ENCODE measurements at regions of chr13 and their contacts with region 1.

Region 1: GRCh38 chr13:98672944-98673545 is 79.4 kb downstream of the SLC15A1 start:
- DNase-seq: peak; percentile 71
- ATAC-seq: peak; percentile 94
- H3K4me3 ChIP-seq: no peak overlapping the region; a peak in 1 of 4 replicates
- H3K27ac ChIP-seq: no peak overlapping the region
- H3K4me1 ChIP-seq: peaks cover 0 to 11% of the 10 kb centered on the region in 2 experiments; a peak in 2 of 4 replicates
- H3K27me3 ChIP-seq: no peaks in the 10 kb centered on the region
- CTCF ChIP-seq: peak; percentile 80 to 99 (median 97)
- POLR2A ChIP-seq: no peak
- RAD21 ChIP-seq: peak; percentile 92

Region 2: GRCh38 chr13:97855570-97856303 is 817.3 kb before region 1 on chr13:
- CTCF ChIA-PET with region 1: interaction called, 4 read pairs
- POLR2A ChIA-PET with region 1: no interaction called
- RAD21 ChIA-PET with region 1: no interaction called
- intact Hi-C with region 1: loop called (anchors 2 kb)
- DNase-seq: peak; percentile 58
- ATAC-seq: peak; percentile 96
- H3K4me3 ChIP-seq: no peak overlapping the region
- H3K27ac ChIP-seq: no peak overlapping the region
- H3K4me1 ChIP-seq: no peaks in the 10 kb centered on the region
- H3K27me3 ChIP-seq: no peaks in the 10 kb centered on the region
- CTCF ChIP-seq: peak; percentile 73 to 84 (median 74)
- POLR2A ChIP-seq: no peak
- RAD21 ChIP-seq: peak; percentile 90

Region 3: GRCh38 chr13:98033277-98034247 is 639.5 kb before region 1 on chr13:
- CTCF ChIA-PET with region 1: interaction called, 10 read pairs
- POLR2A ChIA-PET with region 1: no interaction called
- RAD21 ChIA-PET with region 1: interaction called in 1 of 2 experiments, 3 read pairs
- intact Hi-C with region 1: loop called (anchors 2 kb)
- DNase-seq: peak; percentile 16
- ATAC-seq: peak; percentile 83
- H3K4me3 ChIP-seq: no peak overlapping the region
- H3K27ac ChIP-seq: no peak overlapping the region
- H3K4me1 ChIP-seq: no peaks in the 10 kb centered on the region
- H3K27me3 ChIP-seq: no peaks in the 10 kb centered on the region
- CTCF ChIP-seq: peak; percentile 38 to 76 (median 39); a peak in 5 of 6 replicates
- POLR2A ChIP-seq: no peak
- RAD21 ChIP-seq: peak; percentile 74

Region 4: DNA sequence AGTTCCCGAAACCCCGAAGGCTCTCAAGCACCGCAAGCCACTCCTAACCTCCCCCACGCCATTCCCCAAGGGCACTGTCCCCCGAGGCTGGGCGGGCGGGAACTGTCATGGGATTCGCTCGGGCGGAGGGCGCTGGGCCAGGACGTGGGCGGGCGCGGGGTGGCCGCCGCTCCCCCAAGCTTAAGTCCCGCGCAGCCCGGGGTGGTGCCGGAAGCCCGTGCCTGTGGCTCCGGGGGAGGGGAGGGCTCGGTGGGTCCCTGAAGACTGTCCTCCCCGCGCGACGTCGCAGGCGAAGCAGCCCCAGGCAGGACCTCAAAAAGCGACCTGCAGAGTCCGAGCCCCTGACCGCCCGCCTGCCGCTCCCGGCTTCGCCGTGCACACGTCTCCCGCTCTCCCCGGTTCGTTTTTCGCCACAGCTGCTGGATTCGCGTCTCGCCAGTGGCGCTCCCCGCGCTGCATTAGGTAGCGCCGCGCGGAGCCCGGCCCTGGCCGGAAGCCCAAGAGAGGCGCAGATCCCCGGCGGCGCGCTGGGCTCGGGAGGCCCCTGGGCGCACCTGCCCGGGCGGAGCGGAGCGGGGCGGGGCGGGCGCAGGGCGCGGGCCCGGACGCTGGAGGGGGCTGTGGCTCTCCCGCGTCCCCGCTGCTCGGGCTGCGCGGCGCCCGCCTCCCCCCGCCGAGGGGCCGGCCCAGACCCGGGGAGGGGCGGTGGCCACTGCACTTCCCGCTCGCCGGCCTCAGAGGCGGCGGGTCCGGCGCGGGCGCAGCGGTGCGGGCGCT is 530.5 kb before region 1 on chr13 and contains the start of gene FARP1:
- CTCF ChIA-PET with region 1: no interaction called
- POLR2A ChIA-PET with region 1: no interaction called
- RAD21 ChIA-PET with region 1: no interaction called
- intact Hi-C with region 1: loop called (anchors 10 kb)
- DNase-seq: peak; percentile 27
- ATAC-seq: peak; percentile 89
- H3K4me3 ChIP-seq: peak within 1 kb of the TSS; percentile 51 to 72
- H3K27ac ChIP-seq: peak within 1 kb of the TSS; percentile 64; the same call in 1 of the 2 replicates
- H3K4me1 ChIP-seq: peaks cover 34 to 45% of the 10 kb centered on the region in 2 experiments
- H3K27me3 ChIP-seq: no peaks in the 10 kb centered on the region
- CTCF ChIP-seq: no peak; a peak in 1 of 6 replicates
- POLR2A ChIP-seq: no peak
- RAD21 ChIP-seq: peak; percentile 34
- total RNA-seq, gene FARP1: 30.5 TPM

Region 5: GRCh38 chr13:98445340-98446233 is 227.5 kb before region 1 on chr13:
- CTCF ChIA-PET with region 1: interaction called, 39 read pairs
- POLR2A ChIA-PET with region 1: no interaction called
- RAD21 ChIA-PET with region 1: interaction called in 1 of 2 experiments, 5 read pairs
- intact Hi-C with region 1: loop called (anchors 1 kb)
- DNase-seq: peak; percentile 41
- ATAC-seq: peak; percentile 87
- H3K4me3 ChIP-seq: no peak overlapping the region
- H3K27ac ChIP-seq: no peak overlapping the region; the same call in 1 of the 2 replicates
- H3K4me1 ChIP-seq: peaks cover 0 to 35% of the 10 kb centered on the region in 2 experiments; a peak in 2 of 4 replicates
- H3K27me3 ChIP-seq: no peaks in the 10 kb centered on the region
- CTCF ChIP-seq: peak in 2 of 3 experiments; percentile 89 to 97; a peak in 4 of 6 replicates
- POLR2A ChIP-seq: no peak
- RAD21 ChIP-seq: no peak

Region 6: DNA sequence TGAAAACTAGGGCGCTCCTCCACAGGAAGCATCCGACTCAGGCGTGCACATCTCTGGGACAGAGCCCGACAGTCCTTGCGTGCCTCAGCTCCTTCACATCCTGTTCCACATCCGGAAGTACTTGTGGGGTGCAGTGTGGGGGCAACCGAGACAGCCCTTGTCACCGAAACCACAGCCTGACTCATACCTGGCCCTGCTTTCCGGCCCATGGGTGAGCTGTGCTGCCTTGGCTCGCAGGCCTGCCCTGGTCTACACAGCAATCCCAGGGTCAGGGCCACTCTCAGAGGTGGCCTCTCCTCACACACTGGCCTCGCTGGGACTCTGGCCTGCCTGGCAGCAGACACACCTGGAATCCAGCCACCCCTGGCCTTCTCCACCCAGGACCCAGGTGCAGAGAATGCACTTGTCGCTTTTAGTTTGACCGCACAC is 196.5 kb before region 1 on chr13:
- CTCF ChIA-PET with region 1: no interaction called
- POLR2A ChIA-PET with region 1: no interaction called
- RAD21 ChIA-PET with region 1: no interaction called
- intact Hi-C with region 1: no loop called
- DNase-seq: peak; percentile 64
- ATAC-seq: peak; percentile 92
- H3K4me3 ChIP-seq: peak overlapping the region; percentile 24 to 30
- H3K27ac ChIP-seq: peak overlapping the region; percentile 76
- H3K4me1 ChIP-seq: peaks cover 25 to 58% of the 10 kb centered on the region in 2 experiments
- H3K27me3 ChIP-seq: no peaks in the 10 kb centered on the region
- CTCF ChIP-seq: no peak
- POLR2A ChIP-seq: no peak
- RAD21 ChIP-seq: no peak

Region 7: GRCh38 chr13:98653463-98653985 is 19.5 kb before region 1 on chr13:
- CTCF ChIA-PET with region 1: interaction called, 11 read pairs
- POLR2A ChIA-PET with region 1: no interaction called
- RAD21 ChIA-PET with region 1: interaction called in 1 of 2 experiments, 3 read pairs
- intact Hi-C with region 1: no loop called
- DNase-seq: peak; percentile 85
- ATAC-seq: peak; percentile 97
- H3K4me3 ChIP-seq: no peak overlapping the region
- H3K27ac ChIP-seq: no peak overlapping the region
- H3K4me1 ChIP-seq: peaks cover 0 to 28% of the 10 kb centered on the region in 2 experiments; a peak in 2 of 4 replicates
- H3K27me3 ChIP-seq: no peaks in the 10 kb centered on the region
- CTCF ChIP-seq: peak; percentile 86 to 94 (median 92)
- POLR2A ChIP-seq: no peak
- RAD21 ChIP-seq: peak; percentile 93

Region 8: DNA sequence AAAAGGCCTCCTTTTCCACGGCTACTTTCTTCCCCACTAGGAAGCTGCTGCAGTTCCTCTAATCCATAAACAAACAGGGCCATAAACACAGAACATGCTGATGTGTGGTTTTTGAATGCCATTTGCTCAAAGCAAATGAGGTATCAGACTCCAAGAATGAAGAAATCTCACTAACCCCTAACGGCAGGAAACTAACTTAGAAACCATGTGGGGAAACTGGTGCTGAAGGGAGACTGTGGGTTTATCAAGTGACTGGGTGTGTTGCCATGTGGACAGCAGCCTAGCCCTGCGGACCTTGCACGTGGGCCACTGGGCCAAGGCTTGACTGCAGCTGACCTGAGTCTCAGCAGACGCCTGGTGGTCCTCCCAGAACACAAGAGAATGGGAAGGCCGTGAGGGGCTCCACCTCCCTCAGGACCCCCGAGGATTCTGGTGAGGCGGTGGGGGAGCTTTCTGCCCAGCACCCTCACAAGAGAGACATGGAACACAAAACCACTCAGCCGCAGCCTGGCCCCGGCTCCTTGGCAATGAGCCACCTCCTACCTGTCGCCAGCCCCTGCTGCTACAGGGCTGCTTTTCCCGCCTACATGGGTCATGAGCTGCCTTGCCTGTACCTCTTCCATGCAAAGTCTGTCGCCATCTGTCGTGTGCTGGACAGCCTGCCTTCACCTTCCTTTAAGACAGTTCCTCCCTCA is 68.8 kb after region 1 on chr13:
- CTCF ChIA-PET with region 1: no interaction called
- POLR2A ChIA-PET with region 1: no interaction called
- RAD21 ChIA-PET with region 1: no interaction called
- intact Hi-C with region 1: no loop called
- DNase-seq: no peak
- ATAC-seq: no peak
- H3K4me3 ChIP-seq: no peak overlapping the region
- H3K27ac ChIP-seq: no peak overlapping the region
- H3K4me1 ChIP-seq: peaks cover 0 to 3% of the 10 kb centered on the region in 2 experiments; a peak in 2 of 4 replicates
- H3K27me3 ChIP-seq: no peaks in the 10 kb centered on the region
- CTCF ChIP-seq: no peak
- POLR2A ChIP-seq: no peak
- RAD21 ChIP-seq: no peak

Region 9: GRCh38 chr13:99033814-99034213 is 360.8 kb after region 1 on chr13:
- CTCF ChIA-PET with region 1: no interaction called
- POLR2A ChIA-PET with region 1: no interaction called
- RAD21 ChIA-PET with region 1: no interaction called
- intact Hi-C with region 1: loop called (anchors 2 kb)
- DNase-seq: no peak
- ATAC-seq: peak; percentile 71
- H3K4me3 ChIP-seq: no peak overlapping the region
- H3K27ac ChIP-seq: no peak overlapping the region
- H3K4me1 ChIP-seq: peaks cover 3 to 22% of the 10 kb centered on the region in 2 experiments
- H3K27me3 ChIP-seq: no peaks in the 10 kb centered on the region
- CTCF ChIP-seq: peak; percentile 49 to 66 (median 49); a peak in 5 of 6 replicates
- POLR2A ChIP-seq: no peak
- RAD21 ChIP-seq: peak; percentile 66

Measured in HCT116 (cell line).